ENCODE measurements at regions of chrX and their contacts with region 1.

Region 1: DNA sequence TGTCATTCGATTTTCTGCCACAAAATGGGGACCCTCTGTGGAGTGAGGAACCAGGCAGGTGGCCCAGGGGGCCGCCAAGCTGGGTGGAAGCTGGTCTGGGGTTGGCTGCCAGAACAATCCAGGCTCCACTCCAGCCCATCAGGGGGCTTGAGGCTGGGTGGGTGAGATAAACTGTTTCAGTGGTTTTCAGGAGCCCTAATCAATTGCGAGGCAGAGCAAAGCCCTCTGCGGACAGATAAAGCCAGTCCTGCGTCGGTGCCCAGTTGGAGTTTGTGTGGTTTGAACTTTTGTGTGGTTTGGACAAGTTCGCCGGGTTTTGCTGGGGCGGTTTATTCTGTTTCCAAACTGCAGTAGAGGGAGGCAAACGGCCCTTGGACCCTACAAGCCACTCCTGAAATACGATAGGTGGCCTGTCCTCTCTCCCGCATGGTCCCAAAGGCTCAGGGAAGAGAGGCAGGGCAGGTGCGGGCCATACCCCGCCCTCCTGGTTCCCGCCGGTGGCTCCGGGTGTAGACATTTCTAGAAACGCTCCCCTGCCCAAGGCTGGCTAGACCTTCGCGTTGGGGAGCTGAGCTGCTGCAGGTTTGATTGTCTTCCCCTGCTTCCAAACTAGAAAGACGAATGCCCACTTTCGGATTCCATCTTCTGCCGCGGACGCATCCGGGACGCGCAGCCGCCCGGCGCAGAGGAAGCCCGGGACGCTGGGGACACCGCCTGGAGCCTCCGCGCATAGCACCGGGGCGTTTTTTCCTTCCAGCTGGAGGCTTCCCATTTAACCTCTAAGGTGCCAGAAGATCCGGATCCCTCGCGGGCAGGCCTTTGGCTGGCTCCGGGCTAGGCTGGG is 169.0 kb upstream of the BCOR start:
- DNase-seq: peak; percentile 29
- ATAC-seq: peak; percentile 88
- H3K4me3 ChIP-seq: peak overlapping the region; percentile 45 to 56
- H3K27ac ChIP-seq: peak overlapping the region; percentile 37; the same call in 1 of the 2 replicates
- H3K4me1 ChIP-seq: peaks cover 10 to 37% of the 10 kb centered on the region in 2 experiments; a peak in 3 of 4 replicates
- H3K27me3 ChIP-seq: no peaks in the 10 kb centered on the region
- CTCF ChIP-seq: peak in 2 of 3 experiments; percentile 57 to 61; a peak in 4 of 6 replicates
- POLR2A ChIP-seq: no peak
- RAD21 ChIP-seq: no peak

Region 2: DNA sequence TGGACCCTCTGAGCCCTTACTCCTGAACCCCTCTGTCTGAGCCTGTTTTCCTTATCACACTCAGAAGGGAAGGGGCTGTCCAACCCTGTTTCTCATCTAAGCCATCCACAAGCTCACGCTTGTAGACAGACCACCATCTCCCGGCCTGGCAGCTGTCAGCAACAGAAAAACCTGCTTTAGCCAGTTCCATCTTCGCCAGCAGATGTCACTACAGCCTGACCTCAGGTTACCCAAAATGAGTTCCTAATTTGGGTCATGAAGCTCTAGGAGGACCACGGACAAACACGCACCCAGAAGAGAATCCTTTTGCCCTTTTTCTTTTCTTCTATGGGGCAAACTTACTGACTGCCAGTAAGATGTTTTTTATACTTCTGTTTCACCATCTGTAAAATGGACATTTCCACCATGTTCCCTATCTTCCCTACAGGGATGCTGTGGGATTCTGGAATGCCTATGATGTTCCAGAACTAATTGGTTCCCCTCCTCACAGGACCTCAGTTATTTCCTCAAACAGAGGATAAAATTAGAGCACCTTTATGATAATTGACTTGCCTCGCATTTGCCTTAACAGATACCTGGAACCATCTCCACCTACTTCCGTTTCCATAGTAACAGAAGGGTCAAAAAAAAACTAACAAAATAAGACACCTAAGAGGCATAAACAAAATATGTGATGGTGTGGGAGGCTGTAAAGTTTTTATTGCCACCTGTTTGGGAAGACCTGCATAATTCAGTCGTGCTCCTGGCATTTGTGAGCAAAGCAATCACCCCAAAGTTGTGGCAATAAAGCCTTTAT is 614.2 kb before region 1 on chrX:
- CTCF ChIA-PET with region 1: no interaction called
- POLR2A ChIA-PET with region 1: no interaction called
- RAD21 ChIA-PET with region 1: no interaction called
- intact Hi-C with region 1: loop called (anchors 10 kb)
- DNase-seq: peak; percentile 6
- ATAC-seq: peak; percentile 69
- H3K4me3 ChIP-seq: no peak overlapping the region
- H3K27ac ChIP-seq: no peak overlapping the region
- H3K4me1 ChIP-seq: no peaks in the 10 kb centered on the region
- H3K27me3 ChIP-seq: no peaks in the 10 kb centered on the region
- CTCF ChIP-seq: peak; percentile 23 to 42 (median 39); a peak in 4 of 6 replicates
- POLR2A ChIP-seq: no peak
- RAD21 ChIP-seq: peak; percentile 59

Region 3: GRCh38 chrX:39814391-39814790 is 452.3 kb before region 1 on chrX:
- CTCF ChIA-PET with region 1: interaction called, 3 read pairs
- POLR2A ChIA-PET with region 1: no interaction called
- RAD21 ChIA-PET with region 1: no interaction called
- intact Hi-C with region 1: loop called (anchors 2 kb)
- DNase-seq: peak; percentile 15
- ATAC-seq: peak; percentile 73
- H3K4me3 ChIP-seq: no peak overlapping the region
- H3K27ac ChIP-seq: no peak overlapping the region
- H3K4me1 ChIP-seq: no peaks in the 10 kb centered on the region
- H3K27me3 ChIP-seq: no peaks in the 10 kb centered on the region
- CTCF ChIP-seq: peak; percentile 45 to 55 (median 48); a peak in 5 of 6 replicates
- POLR2A ChIP-seq: no peak
- RAD21 ChIP-seq: peak; percentile 78

Region 4: GRCh38 chrX:40097497-40098263 is 169.0 kb before region 1 on chrX and contains the start of gene BCOR:
- CTCF ChIA-PET with region 1: interaction called, 5 read pairs
- POLR2A ChIA-PET with region 1: no interaction called
- RAD21 ChIA-PET with region 1: no interaction called
- intact Hi-C with region 1: loop called (anchors 5 kb)
- DNase-seq: no peak
- ATAC-seq: peak; percentile 44
- H3K4me3 ChIP-seq: peak within 1 kb of the TSS; percentile 54 to 61
- H3K27ac ChIP-seq: peak within 1 kb of the TSS; percentile 93
- H3K4me1 ChIP-seq: peaks cover 34 to 55% of the 10 kb centered on the region in 2 experiments
- H3K27me3 ChIP-seq: no peaks in the 10 kb centered on the region
- CTCF ChIP-seq: no peak
- POLR2A ChIP-seq: peak; percentile 72
- RAD21 ChIP-seq: no peak
- total RNA-seq, gene BCOR: 35.1 TPM

Region 5: DNA sequence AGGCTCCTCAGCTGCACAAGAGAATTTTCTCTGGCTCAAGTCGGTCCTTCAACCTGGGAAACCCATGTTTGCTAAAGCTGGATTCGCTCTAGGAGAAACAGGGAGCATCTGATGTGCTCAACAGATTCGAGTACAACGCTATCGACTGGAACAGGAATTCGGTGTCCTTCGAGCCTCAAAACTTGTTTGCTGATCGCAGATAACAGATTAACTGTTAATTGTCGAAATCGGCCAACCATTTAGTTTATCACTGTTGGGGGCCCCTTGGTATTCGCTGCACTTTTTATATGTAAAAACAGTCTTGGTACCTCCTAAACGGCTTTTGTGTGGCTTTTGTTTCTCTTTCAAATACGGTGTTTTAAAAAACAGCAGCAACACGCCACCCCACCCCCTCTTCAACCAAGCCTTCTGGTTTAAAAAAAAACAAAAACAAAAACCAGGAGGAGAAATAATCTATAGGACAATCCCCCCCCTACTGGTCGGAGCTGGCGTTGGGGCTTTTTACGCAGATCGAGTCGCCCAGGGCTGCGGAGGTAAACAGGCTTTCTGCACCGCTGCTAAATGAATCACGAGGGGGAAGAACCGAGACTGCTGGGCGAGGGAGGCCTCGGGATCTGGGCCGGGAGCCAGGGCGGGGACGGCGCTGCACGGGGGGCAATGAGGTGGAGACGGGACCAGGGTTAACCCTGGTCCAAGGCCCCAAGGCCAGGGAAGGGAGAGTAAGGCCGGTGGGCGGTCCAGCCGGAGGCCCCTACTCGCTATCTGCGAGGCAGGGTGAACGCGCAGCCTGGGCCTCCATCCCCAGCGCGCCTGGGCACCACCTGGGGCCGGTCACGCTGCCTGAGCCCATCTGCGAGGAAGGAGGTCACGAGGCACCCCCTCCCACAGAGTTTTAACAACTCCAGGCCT is 97.3 kb before region 1 on chrX:
- CTCF ChIA-PET with region 1: no interaction called
- POLR2A ChIA-PET with region 1: no interaction called
- RAD21 ChIA-PET with region 1: no interaction called
- intact Hi-C with region 1: loop called (anchors 10 kb)
- DNase-seq: peak; percentile 78
- ATAC-seq: peak; percentile 33
- H3K4me3 ChIP-seq: peak overlapping the region; percentile 20 to 29
- H3K27ac ChIP-seq: peak overlapping the region; percentile 98
- H3K4me1 ChIP-seq: peaks cover 60 to 97% of the 10 kb centered on the region in 2 experiments
- H3K27me3 ChIP-seq: no peaks in the 10 kb centered on the region
- CTCF ChIP-seq: peak in 2 of 3 experiments; percentile 54 to 63; a peak in 4 of 6 replicates
- POLR2A ChIP-seq: no peak
- RAD21 ChIP-seq: no peak